AG04449 (cell line): ENCODE measurements at regions of chr19 and their contacts with region 1.

Region 1: DNA sequence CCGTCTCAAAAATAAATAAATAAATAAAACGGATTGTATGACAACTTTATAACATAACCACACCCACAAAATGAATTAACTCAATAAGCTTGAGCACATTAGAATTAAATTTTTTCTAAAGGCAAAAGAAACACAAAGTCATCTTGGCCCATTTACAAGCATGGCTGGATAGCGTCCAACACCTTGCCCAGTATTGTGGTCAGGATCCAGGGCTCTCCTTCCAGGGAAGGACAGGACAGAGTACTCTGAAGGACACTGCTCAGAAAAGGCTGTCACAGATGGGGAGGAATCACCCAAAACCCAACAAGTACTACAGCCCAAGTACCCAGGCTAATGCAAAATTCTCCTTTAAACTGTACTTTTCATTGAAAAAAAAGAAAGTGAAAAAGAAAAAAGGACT is 27.1 kb downstream of the SUGP2 start:
- DNase-seq: no peak
- H3K4me3 ChIP-seq: no peak overlapping the region
- CTCF ChIP-seq: no peak

Region 2: GRCh38 chr19:18809150-18809868 is 196.9 kb before region 1 on chr19:
- CTCF ChIA-PET with region 1: no interaction called
- POLR2A ChIA-PET with region 1: no interaction called
- DNase-seq: peak; percentile 19
- H3K4me3 ChIP-seq: no peak overlapping the region
- CTCF ChIP-seq: no peak

Region 3: GRCh38 chr19:18995804-18996241 is 10.4 kb before region 1 on chr19:
- CTCF ChIA-PET with region 1: interaction called, 15 read pairs
- POLR2A ChIA-PET with region 1: no interaction called
- DNase-seq: peak; percentile 46
- H3K4me3 ChIP-seq: no peak overlapping the region
- CTCF ChIP-seq: peak; percentile 71

Region 4: DNA sequence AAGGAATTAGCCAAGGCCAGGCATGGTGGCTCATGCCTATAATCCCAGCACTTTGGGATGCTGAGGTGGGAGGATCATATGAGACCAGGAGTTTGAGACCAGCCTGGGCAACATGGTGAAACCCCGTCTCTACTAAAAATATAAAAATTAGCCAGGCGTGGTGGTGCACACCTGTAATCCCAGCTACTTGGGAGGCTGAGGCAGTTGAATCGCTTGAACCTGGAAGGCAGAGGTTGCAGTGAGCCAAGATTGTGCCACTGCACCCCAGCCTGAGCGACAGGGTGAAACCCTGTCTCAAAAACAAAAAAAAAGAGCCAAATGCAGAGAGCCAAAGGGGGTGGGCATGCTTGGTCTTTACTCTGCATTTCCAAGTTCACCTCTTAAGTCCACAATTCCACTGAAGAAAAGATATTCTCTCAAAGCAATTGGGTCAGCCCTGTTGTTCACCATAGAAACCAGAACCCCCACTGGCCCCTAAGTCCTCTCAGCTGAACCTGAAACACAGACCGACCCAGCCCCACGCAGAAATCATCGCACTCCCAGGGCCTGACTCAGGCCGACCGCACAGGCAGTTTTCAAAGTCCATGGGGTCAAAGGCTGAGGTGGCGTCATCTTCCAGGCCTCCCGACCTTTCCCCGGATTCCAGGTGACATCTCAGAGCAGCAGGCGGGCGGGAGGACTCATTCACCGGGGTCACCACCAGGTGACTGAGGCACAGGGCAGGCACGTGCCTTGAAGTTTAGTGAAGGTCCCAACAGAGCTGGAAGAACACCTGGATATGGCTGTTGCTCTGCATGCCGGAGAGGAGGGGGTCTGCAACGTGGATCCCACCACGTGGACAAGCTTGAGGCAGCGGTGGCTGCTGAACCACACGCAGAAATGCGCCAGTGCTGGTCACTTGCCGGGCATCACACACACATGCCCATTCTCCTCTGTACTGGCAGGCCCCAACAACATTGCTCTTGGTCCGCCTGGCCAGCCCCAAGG is 90.7 kb after region 1 on chr19:
- CTCF ChIA-PET with region 1: no interaction called
- POLR2A ChIA-PET with region 1: no interaction called
- DNase-seq: no peak
- H3K4me3 ChIP-seq: no peak overlapping the region
- CTCF ChIP-seq: no peak